Activated CD8-positive, alpha-beta T cell treated with anti-CD3 and anti-CD28 coated beads, Interleukin-2, amount 10 ng/mL, durations not matched to agents 7 days and 5 days (primary cell): ENCODE measurements at regions of chr22 and their contacts with region 1.

Region 1: DNA sequence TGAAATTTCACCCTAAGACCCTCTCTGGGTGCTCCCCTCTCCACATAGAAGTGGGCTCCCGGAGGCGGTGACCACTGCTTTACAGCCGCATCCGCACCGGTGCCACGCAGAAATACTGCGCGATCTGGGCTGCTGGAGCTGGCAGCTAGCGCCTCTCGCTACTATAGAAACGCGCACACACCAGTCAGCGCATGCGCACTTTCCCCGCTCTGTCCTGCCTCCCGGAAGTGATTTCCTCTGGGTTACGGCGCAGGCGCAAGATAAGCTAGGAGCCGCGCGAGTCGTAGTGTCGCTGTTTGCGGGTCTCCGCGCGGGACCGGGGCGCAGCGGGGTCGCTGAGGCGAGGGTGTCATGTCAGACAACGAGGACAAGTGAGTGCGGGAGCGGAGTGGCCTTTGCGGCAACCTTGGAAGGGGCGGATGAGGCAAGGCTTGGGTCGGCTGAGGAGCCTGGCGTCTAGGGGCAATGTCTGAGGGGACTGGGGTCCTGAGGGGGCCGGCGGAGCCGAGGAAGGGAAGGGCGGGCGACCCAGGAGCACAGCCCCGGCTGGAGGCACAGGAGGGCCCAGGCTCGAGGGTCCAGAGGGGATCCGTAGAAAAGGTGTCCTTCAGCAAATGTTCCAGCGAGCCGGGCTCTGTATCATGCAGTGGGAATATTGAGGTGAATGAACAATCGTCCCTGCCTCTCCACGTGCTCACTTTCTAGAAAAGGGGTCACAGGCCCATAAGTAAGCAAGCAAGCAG is at the starts of genes C22orf23 and POLR2F:
- DNase-seq: peak; percentile 98
- ATAC-seq: peak; percentile 94
- H3K4me3 Mint-ChIP-seq: peak within 1 kb of the TSS; percentile 99
- H3K27ac Mint-ChIP-seq: peak within 1 kb of the TSS; percentile 96
- H3K4me1 Mint-ChIP-seq: peaks cover 23% of the 10 kb centered on the region
- H3K27me3 Mint-ChIP-seq: peaks cover 14% of the 10 kb centered on the region
- total RNA-seq, gene C22orf23: not detected
- total RNA-seq, gene POLR2F: 71.7 to 73.8 TPM

Region 2: DNA sequence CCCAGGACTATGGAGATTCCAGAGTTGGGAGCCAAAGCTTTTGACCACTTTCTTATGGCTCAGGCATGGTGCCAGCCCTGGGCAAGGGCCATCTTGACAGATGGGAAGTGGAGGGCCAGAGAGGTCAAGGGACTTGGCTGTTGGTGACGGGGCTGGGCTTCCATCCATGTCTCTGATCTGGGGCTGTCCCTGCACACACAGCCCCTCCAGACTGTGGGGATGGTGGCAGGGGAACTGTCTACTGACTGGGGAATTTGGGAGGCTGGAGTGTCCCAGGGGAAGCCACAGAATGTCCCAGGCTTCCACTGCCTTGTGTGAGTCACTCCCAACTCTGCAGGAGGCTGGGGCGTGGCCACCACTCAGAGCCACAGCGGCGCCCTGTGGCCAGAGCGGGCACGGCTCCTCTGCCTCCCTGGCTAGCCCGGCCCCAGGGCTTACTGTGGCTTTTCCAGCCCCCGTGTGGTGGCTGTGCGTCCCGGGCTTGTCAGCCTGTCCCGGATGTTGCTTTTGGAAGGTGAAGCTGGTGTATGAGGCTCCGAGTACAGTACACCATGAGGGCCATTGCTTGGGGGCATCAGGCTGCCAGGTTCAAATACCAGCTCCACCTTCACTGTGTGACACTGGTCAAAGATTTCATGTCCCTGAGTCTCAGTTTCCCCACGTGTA is 19.8 kb before region 1 on chr22:
- CTCF ChIA-PET with region 1: interaction called, 11 read pairs
- POLR2A ChIA-PET with region 1: no interaction called
- DNase-seq: peak; percentile 90
- ATAC-seq: peak; percentile 99
- H3K4me3 Mint-ChIP-seq: no peak overlapping the region
- H3K27ac Mint-ChIP-seq: no peak overlapping the region
- H3K4me1 Mint-ChIP-seq: peaks cover 15% of the 10 kb centered on the region
- H3K27me3 Mint-ChIP-seq: no peaks in the 10 kb centered on the region

Region 3: GRCh38 chr22:37965940-37966664 is 12.5 kb after region 1 on chr22:
- CTCF ChIA-PET with region 1: interaction called, 34 read pairs
- POLR2A ChIA-PET with region 1: no interaction called
- DNase-seq: no peak
- ATAC-seq: no peak
- H3K4me3 Mint-ChIP-seq: no peak overlapping the region
- H3K27ac Mint-ChIP-seq: no peak overlapping the region
- H3K4me1 Mint-ChIP-seq: peaks cover 4% of the 10 kb centered on the region
- H3K27me3 Mint-ChIP-seq: no peaks in the 10 kb centered on the region